H1 (cell line): ENCODE measurements at regions of chr2 and their contacts with region 1.

Region 1: DNA sequence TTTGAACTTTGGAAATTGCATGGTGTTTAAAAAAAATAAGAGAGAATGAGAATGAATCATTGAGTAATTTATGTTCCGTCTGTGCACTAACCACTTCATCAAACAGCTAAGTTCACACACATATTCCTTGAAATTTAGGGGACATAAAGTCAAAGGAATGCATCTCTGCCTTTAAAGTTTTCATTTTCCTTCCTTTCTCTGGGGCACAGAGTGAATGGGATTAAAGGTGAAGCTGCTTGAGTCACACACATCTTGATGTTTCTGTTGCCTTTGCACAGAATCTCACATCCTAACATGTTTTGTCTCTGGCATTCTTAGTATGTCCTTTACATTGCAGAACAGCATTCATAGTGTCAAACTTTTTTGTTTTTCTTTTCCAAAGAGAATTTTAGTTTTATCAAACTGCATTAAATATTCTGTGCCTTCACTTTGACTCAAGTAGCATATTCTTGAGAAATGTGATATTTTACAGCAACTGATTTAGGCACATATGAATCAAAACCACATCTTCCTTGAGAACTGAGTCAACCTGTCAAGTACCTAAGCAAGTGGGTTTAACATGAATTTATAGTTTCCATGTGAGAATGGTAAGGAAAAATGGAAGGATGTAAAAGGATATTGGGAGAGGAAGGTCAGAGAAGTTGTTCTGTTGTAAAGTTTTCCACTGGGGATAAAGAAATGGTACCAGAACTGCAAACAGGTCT is 169.1 kb upstream of the THUMPD2 start:
- DNase-seq: no peak
- H3K4me3 ChIP-seq: no peak overlapping the region
- H3K27ac ChIP-seq: no peak overlapping the region
- H3K4me1 ChIP-seq: no peaks in the 10 kb centered on the region
- H3K27me3 ChIP-seq: no peaks in the 10 kb centered on the region
- CTCF ChIP-seq: no peak
- EP300 ChIP-seq: no peak
- POLR2A ChIP-seq: no peak
- RAD21 ChIP-seq: no peak

Region 2: GRCh38 chr2:39968037-39968436 is 19.9 kb after region 1 on chr2:
- CTCF ChIA-PET with region 1: interaction called, 10 read pairs
- POLR2A ChIA-PET with region 1: no interaction called
- DNase-seq: no peak
- H3K4me3 ChIP-seq: no peak overlapping the region
- H3K27ac ChIP-seq: no peak overlapping the region
- H3K4me1 ChIP-seq: no peaks in the 10 kb centered on the region
- H3K27me3 ChIP-seq: no peaks in the 10 kb centered on the region
- CTCF ChIP-seq: no peak
- EP300 ChIP-seq: no peak
- POLR2A ChIP-seq: no peak
- RAD21 ChIP-seq: no peak